Heart right ventricle (tissue), 16 donors: ENCODE measurements at regions of chr12 and their contacts with region 1.

Region 1: GRCh38 chr12:12716793-12717585 is at the start of gene CDKN1B:
- DNase-seq: peak; percentile 91 to 92
- ATAC-seq: peak; percentile 92 to 96 (median 94)
- H3K4me3 ChIP-seq: peak within 1 kb of the TSS; percentile 64 to 99 (median 96)
- H3K27ac ChIP-seq: peak within 1 kb of the TSS; percentile 99 to 100 (median 100)
- H3K4me1 ChIP-seq: peaks cover 15 to 67% (median 61%) of the 10 kb centered on the region in 9 donors
- H3K27me3 ChIP-seq: no peaks in the 10 kb centered on the region
- CTCF ChIP-seq: peak in 1 of 9 donors; percentile 11
- total RNA-seq, gene CDKN1B: 26.3 to 56.2 (median 39.2) TPM

Region 2: GRCh38 chr12:12521044-12521485 is 195.9 kb before region 1 on chr12:
- intact Hi-C with region 1: no loop called
- DNase-seq: no peak
- ATAC-seq: no peak
- H3K4me3 ChIP-seq: no peak overlapping the region
- H3K27ac ChIP-seq: no peak overlapping the region
- H3K4me1 ChIP-seq: peaks cover 0 to 46% (median 19%) of the 10 kb centered on the region in 9 donors
- H3K27me3 ChIP-seq: no peaks in the 10 kb centered on the region
- CTCF ChIP-seq: no peak

Region 3: GRCh38 chr12:12611512-12612306 is 105.3 kb before region 1 on chr12 and contains the start of gene CREBL2:
- intact Hi-C with region 1: loop called in 1 of 10 experiments (anchors 5 kb)
- DNase-seq: peak; percentile 93 to 94
- ATAC-seq: peak; percentile 97 to 99 (median 97)
- H3K4me3 ChIP-seq: peak within 1 kb of the TSS; percentile 64 to 89 (median 76)
- H3K27ac ChIP-seq: peak within 1 kb of the TSS; percentile 81 to 97 (median 91)
- H3K4me1 ChIP-seq: peaks cover 0 to 58% (median 24%) of the 10 kb centered on the region in 9 donors
- H3K27me3 ChIP-seq: no peaks in the 10 kb centered on the region
- CTCF ChIP-seq: peak in 1 of 9 donors; percentile 16
- total RNA-seq, gene CREBL2: 15.2 to 26.4 (median 18.6) TPM

Region 4: GRCh38 chr12:12696562-12697383 is 20.2 kb before region 1 on chr12:
- intact Hi-C with region 1: loop called in 2 of 10 experiments (anchors 1 to 2 kb)
- DNase-seq: peak; percentile 91 to 93
- ATAC-seq: peak; percentile 88 to 98 (median 94)
- H3K4me3 ChIP-seq: peak overlapping the region; percentile 35 to 71 (median 62)
- H3K27ac ChIP-seq: peak overlapping the region; percentile 91 to 99 (median 96)
- H3K4me1 ChIP-seq: peaks cover 0 to 17% (median 6%) of the 10 kb centered on the region in 9 donors
- H3K27me3 ChIP-seq: no peaks in the 10 kb centered on the region
- CTCF ChIP-seq: no peak

Region 5: DNA sequence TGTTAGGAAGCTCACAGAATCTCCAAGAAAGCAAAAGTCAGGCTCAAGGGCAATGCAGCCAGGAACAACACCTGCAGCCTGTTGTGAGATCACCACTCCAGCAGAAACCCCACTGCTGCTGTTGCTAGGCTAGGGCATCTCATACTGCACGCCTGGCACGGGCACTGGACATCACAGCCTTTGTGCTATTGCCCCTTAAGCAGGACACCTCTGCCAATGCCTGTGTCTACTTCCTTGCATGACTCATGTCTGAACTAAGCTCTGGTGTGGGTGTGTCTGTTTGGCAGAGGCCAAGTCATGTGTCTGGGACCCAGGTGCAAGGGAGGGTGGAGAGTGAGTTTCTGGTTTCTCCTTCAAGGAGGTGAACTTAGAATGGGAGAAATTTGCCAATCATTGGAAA is 86.2 kb after region 1 on chr12:
- intact Hi-C with region 1: loop called in 1 of 10 experiments (anchors 5 kb)
- DNase-seq: peak in 1 of 2 donors; percentile 64
- ATAC-seq: peak; percentile 56 to 86 (median 70)
- H3K4me3 ChIP-seq: no peak overlapping the region
- H3K27ac ChIP-seq: peak overlapping the region in 6 of 10 donors; percentile 1 to 63 (median 28)
- H3K4me1 ChIP-seq: peaks cover 0 to 36% (median 24%) of the 10 kb centered on the region in 9 donors
- H3K27me3 ChIP-seq: no peaks in the 10 kb centered on the region
- CTCF ChIP-seq: no peak